A673 (cell line): ENCODE measurements at regions of chr11 and their contacts with region 1.

Region 1: DNA sequence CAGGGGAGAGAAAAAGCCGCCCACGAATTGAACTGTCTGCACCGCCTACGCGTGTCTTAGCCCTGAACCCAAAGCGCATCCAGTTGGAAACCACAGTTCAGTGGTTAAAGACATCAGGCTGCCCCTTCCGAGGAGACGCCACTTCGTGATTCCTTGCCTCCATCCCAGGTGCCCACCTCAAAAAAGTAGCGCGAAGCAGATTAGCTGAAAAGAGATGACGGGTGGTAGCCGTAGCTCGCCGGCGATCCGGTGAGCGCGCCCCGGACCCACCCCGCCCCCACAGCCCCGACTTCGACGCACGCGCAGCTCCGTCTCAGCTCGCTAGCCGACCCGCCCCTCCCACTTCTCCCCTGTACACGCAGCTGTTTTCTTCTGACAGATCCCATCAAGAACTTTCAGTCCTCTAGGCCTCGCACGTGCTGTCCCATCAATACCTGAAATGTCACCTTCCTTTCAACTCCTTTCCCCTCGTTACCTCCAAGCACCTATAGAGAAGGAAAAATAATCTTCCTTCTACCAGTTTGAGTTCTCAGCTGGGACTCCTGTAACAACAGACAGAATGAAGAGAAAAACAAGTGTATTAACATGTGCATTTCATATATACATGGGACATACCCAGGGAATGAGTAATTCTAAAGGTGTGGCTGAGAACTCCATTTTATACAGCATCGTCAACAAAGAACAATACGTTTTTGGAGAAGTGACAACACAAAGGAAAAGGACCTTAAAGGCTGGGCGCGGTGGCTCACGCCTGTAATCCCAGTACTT is 49.5 kb downstream of the OR4D9 start:
- DNase-seq: peak; percentile 93
- H3K4me3 ChIP-seq: peak overlapping the region; percentile 90
- H3K27ac ChIP-seq: peak overlapping the region; percentile 80
- H3K4me1 ChIP-seq: peaks cover 6% of the 10 kb centered on the region
- H3K27me3 ChIP-seq: no peaks in the 10 kb centered on the region
- CTCF ChIP-seq: no peak

Region 2: DNA sequence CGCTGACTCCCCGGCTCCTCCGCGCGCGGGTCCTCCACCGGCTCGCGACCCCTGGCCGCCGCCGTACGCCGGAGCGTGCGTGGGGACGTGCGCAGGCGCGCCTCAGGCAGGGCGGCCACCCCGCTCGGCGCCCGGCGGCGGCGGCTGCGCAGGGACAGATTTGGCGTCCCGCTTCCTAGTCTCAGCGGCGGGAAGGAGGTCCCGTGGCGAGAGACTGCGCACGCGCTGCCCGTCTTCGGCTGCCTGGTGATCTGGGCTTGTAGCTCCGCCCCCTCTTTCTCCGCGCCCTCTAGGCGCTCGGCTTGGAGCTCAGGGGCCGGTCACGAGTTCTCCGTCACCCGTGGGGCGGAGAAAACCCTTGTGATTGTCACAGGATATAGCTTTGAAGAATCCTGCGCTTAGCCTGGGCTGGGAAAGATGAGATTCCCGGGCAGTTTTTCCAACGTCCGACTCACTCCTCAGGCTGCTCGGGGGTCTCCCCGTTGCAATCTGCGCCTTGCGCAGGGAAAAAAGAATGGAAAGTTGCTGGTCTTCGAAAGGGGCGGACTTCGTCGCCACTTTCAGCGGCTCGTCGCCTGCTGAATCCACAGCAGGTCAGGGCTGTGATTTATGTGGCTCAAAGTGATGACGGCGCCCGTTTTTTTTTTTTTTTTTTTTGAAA is 108.2 kb after region 1 on chr11 and contains the start of gene PATL1:
- CTCF ChIA-PET with region 1: no interaction called
- POLR2A ChIA-PET with region 1: interaction called, 3 read pairs
- intact Hi-C with region 1: loop called (anchors 5 kb)
- DNase-seq: peak; percentile 99
- H3K4me3 ChIP-seq: peak within 1 kb of the TSS; percentile 93
- H3K27ac ChIP-seq: peak within 1 kb of the TSS; percentile 89
- H3K4me1 ChIP-seq: peaks cover 22% of the 10 kb centered on the region
- H3K27me3 ChIP-seq: no peaks in the 10 kb centered on the region
- CTCF ChIP-seq: no peak
- total RNA-seq, gene PATL1: 65.2 and 78.9 TPM in 2 replicates

Region 3: DNA sequence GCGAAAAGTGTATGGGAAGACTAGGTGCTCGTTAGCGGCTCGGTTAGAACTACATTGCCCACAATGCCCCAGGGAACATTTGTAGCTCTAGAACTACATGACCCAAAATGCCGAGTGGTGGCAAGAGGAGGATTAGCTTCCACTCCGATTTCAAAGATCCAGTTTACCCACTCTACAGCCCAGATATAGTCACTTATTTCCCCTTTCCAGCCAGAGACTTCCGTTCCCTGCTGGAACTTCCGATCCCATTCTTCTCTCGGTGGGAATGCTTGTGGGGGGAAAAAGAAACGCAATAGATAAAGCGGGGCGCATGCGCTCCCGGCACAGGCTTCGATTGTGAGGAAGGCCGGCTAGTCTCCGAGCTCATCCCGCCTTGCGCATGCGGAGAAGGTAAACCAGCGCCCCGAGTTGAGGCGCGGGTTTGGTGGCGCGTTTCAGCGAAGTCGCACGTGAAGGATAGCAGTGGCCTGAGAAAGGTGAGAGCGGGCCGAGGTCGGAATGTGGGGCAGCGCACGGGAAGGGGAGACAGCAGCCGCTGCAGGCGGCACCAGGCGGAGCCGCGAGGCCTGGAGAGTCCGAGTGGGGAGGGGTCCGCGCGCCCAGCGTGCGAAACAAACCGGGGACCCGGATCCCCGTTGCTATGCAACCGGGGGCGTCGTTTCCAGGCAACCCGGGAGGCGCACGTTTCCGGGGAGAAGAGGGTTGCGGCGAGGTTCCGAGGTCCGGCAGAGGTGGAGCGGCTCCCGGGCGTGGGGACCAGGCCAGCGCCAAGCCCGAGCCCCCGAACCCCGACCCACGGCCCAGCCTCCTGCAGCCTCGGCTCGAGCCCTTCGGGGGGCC is 1353.1 kb after region 1 on chr11 and contains the start of gene TMEM109:
- CTCF ChIA-PET with region 1: no interaction called
- POLR2A ChIA-PET with region 1: no interaction called
- intact Hi-C with region 1: loop called (anchors 10 kb)
- DNase-seq: peak; percentile 99
- H3K4me3 ChIP-seq: peak within 1 kb of the TSS; percentile 62
- H3K27ac ChIP-seq: peak within 1 kb of the TSS; percentile 89
- H3K4me1 ChIP-seq: peaks cover 28% of the 10 kb centered on the region
- H3K27me3 ChIP-seq: no peaks in the 10 kb centered on the region
- CTCF ChIP-seq: no peak
- total RNA-seq, gene TMEM109: 139 and 169 TPM in 2 replicates